ENCODE measurements at regions of chr15 and their contacts with region 1.

Region 1: GRCh38 chr15:65484876-65485275 is 32.6 kb downstream of the DPP8 start:
- DNase-seq: no peak
- H3K4me3 ChIP-seq: no peak overlapping the region
- H3K27ac ChIP-seq: no peak overlapping the region
- H3K4me1 ChIP-seq: no peaks in the 10 kb centered on the region
- H3K27me3 ChIP-seq: no peaks in the 10 kb centered on the region
- CTCF ChIP-seq: no peak

Region 2: DNA sequence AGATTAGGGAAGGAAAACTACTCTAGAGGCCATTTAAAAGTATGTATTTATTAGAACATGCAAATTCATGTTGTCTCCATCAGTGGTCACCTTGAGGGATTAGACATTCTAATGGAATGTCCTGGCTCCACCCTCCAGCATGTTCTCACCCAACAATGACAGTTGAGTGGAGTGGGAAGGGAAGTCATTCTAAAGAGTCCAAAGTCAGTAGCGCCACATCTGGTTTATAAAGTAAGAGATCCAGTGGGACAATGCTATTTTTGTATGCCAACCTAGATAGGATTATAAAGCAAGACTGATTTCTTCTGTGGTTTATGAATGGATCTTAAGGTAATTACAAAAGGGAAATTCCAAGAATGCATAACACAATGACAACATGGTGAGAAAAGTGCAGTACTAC is 170.2 kb after region 1 on chr15:
- CTCF ChIA-PET with region 1: no interaction called
- POLR2A ChIA-PET with region 1: interaction called, 13 read pairs
- intact Hi-C with region 1: no loop called
- DNase-seq: no peak
- H3K4me3 ChIP-seq: no peak overlapping the region
- H3K27ac ChIP-seq: no peak overlapping the region
- H3K4me1 ChIP-seq: no peaks in the 10 kb centered on the region
- H3K27me3 ChIP-seq: no peaks in the 10 kb centered on the region
- CTCF ChIP-seq: no peak